WTC11 (cell line): ENCODE measurements at regions of chr19 and their contacts with region 1.

Region 1: DNA sequence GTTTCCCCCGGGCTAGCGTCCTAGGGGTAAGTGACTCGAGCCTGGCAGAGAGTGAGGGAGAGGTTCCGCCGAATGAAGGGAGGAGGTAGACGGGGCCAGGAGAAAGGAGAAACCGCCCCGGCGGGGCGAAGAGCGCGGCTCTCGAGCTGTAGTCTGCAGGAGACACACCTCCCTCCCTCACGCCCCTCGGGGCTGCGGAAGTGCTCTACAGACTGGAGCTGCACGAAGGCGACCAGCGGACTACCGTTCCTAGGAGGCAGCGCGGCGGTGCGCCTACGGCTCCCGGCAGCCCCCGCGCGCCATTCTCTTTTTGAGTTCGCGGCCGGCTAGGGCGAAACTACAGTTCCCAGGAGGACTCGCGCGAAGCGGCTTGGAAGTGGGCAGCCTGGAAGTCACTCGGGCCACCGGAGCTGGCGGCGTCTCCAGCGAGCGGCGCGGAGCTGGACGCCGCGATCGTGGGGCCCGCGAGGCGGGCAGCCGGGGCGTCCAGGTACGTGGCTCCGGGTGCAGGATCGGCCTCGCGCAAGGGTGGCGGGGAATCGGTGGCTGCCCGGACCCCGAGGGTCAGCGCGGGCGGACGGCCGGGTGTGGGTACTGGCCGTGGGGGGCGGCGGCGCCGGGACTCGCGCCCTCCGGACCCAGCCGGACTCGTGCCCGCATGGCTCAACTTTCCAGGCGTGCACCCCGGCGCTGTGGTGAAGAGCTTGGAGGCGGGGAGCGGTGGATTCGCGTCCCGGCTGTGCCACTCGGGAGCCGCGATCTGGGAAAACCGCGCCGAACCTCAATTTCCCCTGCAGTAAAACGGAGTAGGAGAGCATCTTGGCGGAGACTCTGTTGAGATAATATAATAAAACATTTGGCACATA is at the start of gene SIPA1L3:
- DNase-seq: peak; percentile 97
- ATAC-seq: peak; percentile 92
- H3K4me3 Mint-ChIP-seq: peak within 1 kb of the TSS; percentile 90
- H3K27ac Mint-ChIP-seq: peak within 1 kb of the TSS; percentile 98
- H3K4me1 Mint-ChIP-seq: peaks cover 38% of the 10 kb centered on the region
- H3K27me3 Mint-ChIP-seq: no peaks in the 10 kb centered on the region; the same call in 1 of the 2 replicates
- CTCF ChIP-seq: no peak
- total RNA-seq, gene SIPA1L3: 41.5 to 44.4 TPM (median 42.4 TPM) in 3 replicates

Region 2: GRCh38 chr19:37706052-37706605 is 201.0 kb before region 1 on chr19:
- CTCF ChIA-PET with region 1: no interaction called
- POLR2A ChIA-PET with region 1: no interaction called
- DNase-seq: no peak
- ATAC-seq: no peak
- H3K4me3 Mint-ChIP-seq: no peak overlapping the region
- H3K27ac Mint-ChIP-seq: peak overlapping the region; percentile 44; the same call in 1 of the 2 replicates
- H3K4me1 Mint-ChIP-seq: no peaks in the 10 kb centered on the region
- H3K27me3 Mint-ChIP-seq: no peaks in the 10 kb centered on the region
- CTCF ChIP-seq: no peak

Region 3: GRCh38 chr19:37931881-37932655 is 25.0 kb after region 1 on chr19:
- CTCF ChIA-PET with region 1: interaction called, 38 read pairs
- POLR2A ChIA-PET with region 1: interaction called, 31 read pairs
- DNase-seq: peak; percentile 69
- ATAC-seq: peak; percentile 64
- H3K4me3 Mint-ChIP-seq: peak overlapping the region; percentile 60
- H3K27ac Mint-ChIP-seq: peak overlapping the region; percentile 91
- H3K4me1 Mint-ChIP-seq: peaks cover 60% of the 10 kb centered on the region
- H3K27me3 Mint-ChIP-seq: no peaks in the 10 kb centered on the region; the same call in 1 of the 2 replicates
- CTCF ChIP-seq: no peak

Region 4: DNA sequence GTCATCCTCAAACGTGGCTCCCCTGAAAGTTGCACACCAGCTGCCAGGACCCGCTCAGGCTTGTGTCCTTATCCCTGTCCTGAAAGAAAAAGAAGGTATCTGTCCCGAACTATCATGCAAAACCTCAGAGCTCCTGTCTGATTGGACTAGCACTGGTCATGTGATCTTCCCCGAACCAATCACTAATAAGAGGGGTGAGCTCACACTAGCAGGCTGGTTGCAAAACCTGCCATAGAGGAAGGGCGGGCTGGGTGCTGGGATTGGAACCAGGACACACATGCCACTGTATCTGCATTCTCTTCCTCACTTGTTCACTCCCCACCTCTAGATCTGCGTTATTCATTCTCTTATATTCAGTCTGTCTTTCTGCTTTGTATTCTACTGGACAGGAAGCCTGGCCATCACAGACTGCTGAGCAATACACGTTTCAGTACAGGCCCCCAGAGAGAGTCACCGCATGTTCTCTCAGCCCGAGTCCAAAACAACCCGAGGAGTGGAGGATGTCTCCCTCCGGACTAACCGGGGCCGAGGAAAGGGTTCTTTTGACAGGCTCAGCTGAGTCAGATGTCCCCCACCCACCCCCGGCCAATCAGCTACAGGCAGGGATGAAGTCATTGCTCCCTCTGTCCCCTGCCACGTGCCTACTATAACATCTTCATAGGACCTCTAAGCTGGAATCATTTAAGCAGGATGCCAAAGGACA is 97.6 kb after region 1 on chr19:
- CTCF ChIA-PET with region 1: interaction called, 29 read pairs
- POLR2A ChIA-PET with region 1: interaction called, 31 read pairs
- DNase-seq: peak; percentile 71
- ATAC-seq: peak; percentile 87
- H3K4me3 Mint-ChIP-seq: no peak overlapping the region
- H3K27ac Mint-ChIP-seq: no peak overlapping the region
- H3K4me1 Mint-ChIP-seq: peaks cover 4% of the 10 kb centered on the region; the same call in 1 of the 2 replicates
- H3K27me3 Mint-ChIP-seq: no peaks in the 10 kb centered on the region
- CTCF ChIP-seq: no peak

Region 5: GRCh38 chr19:38044267-38045111 is 137.4 kb after region 1 on chr19:
- CTCF ChIA-PET with region 1: interaction called, 10 read pairs
- POLR2A ChIA-PET with region 1: interaction called, 7 read pairs
- DNase-seq: no peak
- ATAC-seq: peak; percentile 23; the same call in 1 of the 2 replicates
- H3K4me3 Mint-ChIP-seq: no peak overlapping the region
- H3K27ac Mint-ChIP-seq: no peak overlapping the region; the same call in 1 of the 2 replicates
- H3K4me1 Mint-ChIP-seq: peaks cover 54% of the 10 kb centered on the region
- H3K27me3 Mint-ChIP-seq: no peaks in the 10 kb centered on the region; the same call in 1 of the 2 replicates
- CTCF ChIP-seq: no peak

Region 6: DNA sequence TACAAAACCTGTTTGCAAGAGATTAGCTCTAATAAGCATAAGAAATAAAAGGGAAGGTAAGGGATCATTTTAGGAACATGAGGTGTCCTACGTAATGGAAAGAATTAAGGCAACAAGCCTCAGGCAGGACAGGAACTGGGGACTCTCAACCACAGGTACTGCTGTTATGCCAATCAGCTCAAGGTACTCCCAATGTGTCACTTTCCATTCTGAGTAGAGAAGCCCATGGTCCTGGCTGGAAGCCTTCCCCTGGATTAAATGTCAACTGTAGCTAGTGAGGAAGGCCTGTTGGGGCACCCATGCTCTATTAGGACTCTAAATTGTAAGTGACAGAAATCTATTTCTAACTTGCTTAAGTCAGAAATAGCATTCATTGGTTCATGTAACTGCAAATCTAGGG is 182.3 kb after region 1 on chr19:
- CTCF ChIA-PET with region 1: interaction called, 20 read pairs
- POLR2A ChIA-PET with region 1: interaction called, 6 read pairs
- DNase-seq: no peak
- ATAC-seq: no peak
- H3K4me3 Mint-ChIP-seq: no peak overlapping the region
- H3K27ac Mint-ChIP-seq: no peak overlapping the region
- H3K4me1 Mint-ChIP-seq: no peaks in the 10 kb centered on the region
- H3K27me3 Mint-ChIP-seq: no peaks in the 10 kb centered on the region
- CTCF ChIP-seq: no peak

Region 7: DNA sequence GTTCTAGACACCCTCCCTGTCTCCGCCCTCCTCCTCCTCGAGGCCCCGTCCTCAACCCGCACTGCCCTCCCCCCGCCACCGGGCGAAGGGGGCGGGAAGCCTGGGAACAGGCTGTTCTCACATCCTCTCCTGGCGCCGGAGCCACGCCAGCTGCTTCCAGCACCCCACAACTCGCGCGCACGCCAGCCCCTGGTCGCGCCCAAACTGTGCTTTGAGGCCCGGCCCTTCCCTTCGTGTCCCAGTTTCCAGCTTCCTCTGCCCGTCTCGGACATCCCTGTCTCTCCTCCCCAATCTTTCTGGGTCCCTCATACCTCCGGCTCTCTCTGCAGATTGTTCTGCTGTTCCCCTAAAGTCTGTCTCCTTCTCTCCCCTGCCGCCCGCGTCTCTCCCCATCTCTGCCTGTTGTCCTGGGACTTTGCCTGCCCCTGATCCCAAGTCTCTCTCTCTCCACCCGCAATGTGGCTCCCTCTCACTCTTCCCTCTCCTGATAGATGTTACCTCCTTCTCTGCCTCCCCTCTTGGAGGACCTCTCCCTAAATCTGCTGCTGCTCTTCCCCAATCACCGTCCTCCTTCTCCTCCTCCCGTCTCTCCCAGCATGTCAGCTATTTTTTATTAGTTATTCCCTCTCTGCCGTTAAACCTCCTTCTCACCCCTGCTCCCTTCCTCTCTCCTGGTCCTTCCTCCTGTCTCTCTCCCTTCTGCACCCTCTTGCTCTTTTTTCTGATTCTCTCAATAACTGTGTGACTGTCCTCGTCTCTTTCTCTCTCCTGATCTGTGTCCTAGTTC is 302.8 kb after region 1 on chr19:
- CTCF ChIA-PET with region 1: interaction called, 13 read pairs
- POLR2A ChIA-PET with region 1: interaction called, 6 read pairs
- DNase-seq: peak; percentile 65
- ATAC-seq: peak; percentile 26
- H3K4me3 Mint-ChIP-seq: peak overlapping the region; percentile 70
- H3K27ac Mint-ChIP-seq: no peak overlapping the region
- H3K4me1 Mint-ChIP-seq: peaks cover 32% of the 10 kb centered on the region
- H3K27me3 Mint-ChIP-seq: peaks cover 17% of the 10 kb centered on the region
- CTCF ChIP-seq: no peak